Naive thymus-derived CD4-positive, alpha-beta T cell (primary cell): ENCODE measurements at regions of chr2 and their contacts with region 1.

Region 1: GRCh38 chr2:102082571-102083392 is 59.8 kb upstream of the IL1R1 start:
- DNase-seq: peak in 8 of 9 donors; percentile 36 to 75 (median 64)
- ATAC-seq: peak; percentile 83
- H3K4me3 ChIP-seq: peak overlapping the region; percentile 24
- H3K4me3 Mint-ChIP-seq: peak overlapping the region; percentile 67 to 88 (median 80)
- H3K27ac ChIP-seq: peak overlapping the region; percentile 61
- H3K27ac Mint-ChIP-seq: peak overlapping the region; percentile 84 to 95 (median 91)
- H3K4me1 ChIP-seq: peaks cover 10 to 20% of the 10 kb centered on the region in 2 donors
- H3K4me1 Mint-ChIP-seq: peaks cover 19 to 49% (median 42%) of the 10 kb centered on the region in 7 donors
- H3K27me3 ChIP-seq: no peaks in the 10 kb centered on the region
- H3K27me3 Mint-ChIP-seq: peaks cover 0 to 20% (median 0%) of the 10 kb centered on the region in 5 donors

Region 2: DNA sequence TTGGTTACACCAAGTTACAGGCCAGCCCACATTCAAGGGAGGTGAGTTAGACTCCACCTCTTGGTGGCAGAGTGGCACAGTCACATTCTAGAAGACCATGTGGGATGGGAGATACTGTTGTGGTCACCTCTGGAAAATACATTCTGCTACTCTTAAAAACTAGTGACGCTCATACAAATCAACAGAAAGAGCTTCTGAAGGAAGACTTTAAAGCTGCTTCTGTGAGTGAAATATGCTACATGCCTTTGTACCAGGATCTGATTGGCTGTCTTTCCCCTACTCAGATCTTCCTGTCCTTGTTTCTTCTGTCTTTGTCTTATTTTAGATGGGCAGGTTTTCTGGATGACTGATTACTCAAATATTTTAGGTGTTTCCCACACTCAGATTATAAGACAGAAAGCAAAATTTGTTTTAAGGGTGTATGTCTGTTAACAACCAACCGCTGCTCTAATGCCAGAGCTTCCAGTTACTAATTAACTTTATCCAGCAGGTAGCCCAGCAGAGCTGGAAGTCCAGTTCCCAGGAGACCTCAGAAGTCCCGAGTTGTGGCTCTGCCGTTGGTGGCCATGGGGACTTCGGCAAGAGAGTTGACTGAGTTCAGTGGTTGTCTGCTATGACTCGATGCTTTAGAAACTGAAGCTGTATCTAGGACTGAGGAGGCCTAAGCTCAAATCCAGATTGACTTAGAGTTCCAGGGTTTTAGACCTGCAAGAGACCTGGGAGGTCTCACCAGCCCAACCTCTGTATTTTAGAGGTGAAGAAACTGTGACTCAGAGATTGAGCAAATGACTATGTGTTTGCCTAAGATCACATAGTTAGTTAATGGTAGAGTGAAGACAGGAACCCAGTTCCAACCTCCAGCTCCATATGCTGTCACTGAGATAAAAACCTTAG is 83.6 kb before region 1 on chr2:
- CTCF ChIA-PET with region 1: no interaction called
- POLR2A ChIA-PET with region 1: no interaction called
- intact Hi-C with region 1: no loop called
- DNase-seq: no peak
- ATAC-seq: no peak
- H3K4me3 ChIP-seq: no peak overlapping the region
- H3K4me3 Mint-ChIP-seq: no peak overlapping the region
- H3K27ac ChIP-seq: no peak overlapping the region
- H3K27ac Mint-ChIP-seq: no peak overlapping the region
- H3K4me1 ChIP-seq: no peaks in the 10 kb centered on the region
- H3K4me1 Mint-ChIP-seq: peaks cover 0 to 6% (median 0%) of the 10 kb centered on the region in 7 donors
- H3K27me3 ChIP-seq: no peaks in the 10 kb centered on the region
- H3K27me3 Mint-ChIP-seq: peaks cover 0 to 17% (median 0%) of the 10 kb centered on the region in 5 donors

Region 3: DNA sequence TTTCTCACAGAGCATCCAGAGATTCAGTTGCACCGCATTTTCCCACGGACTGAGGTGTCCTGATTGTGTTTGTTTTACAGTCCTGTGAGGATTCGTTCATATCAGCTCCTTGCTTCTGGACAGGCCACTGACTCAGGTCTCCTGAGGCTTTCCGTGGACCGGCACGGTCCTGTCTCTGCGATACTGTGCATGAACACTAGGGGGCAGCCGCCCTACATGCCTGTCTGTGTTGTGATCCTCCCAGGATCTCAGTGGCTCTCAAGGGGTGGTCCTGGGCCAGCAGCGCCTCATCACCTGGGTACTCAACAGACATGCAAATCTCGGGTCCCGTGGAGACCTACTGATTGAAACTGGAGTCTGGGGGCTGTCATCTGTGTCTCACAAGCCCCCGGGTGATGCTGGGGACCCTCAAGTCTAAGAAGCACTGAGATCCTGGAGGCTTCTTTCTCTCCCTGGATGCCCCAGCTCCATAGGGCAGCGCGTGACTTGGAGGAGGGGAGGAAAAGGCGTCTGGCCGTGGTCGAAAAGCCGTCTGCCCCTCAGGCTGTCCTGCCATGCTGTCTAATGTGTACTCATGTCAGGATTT is 62.1 kb before region 1 on chr2:
- CTCF ChIA-PET with region 1: no interaction called
- POLR2A ChIA-PET with region 1: no interaction called
- intact Hi-C with region 1: loop called in 1 of 2 experiments (anchors 5 kb)
- DNase-seq: peak; percentile 61 to 82 (median 76)
- ATAC-seq: peak; percentile 96
- H3K4me3 ChIP-seq: no peak overlapping the region
- H3K4me3 Mint-ChIP-seq: no peak overlapping the region
- H3K27ac ChIP-seq: no peak overlapping the region
- H3K27ac Mint-ChIP-seq: no peak overlapping the region
- H3K4me1 ChIP-seq: no peaks in the 10 kb centered on the region
- H3K4me1 Mint-ChIP-seq: peaks cover 0 to 12% (median 0%) of the 10 kb centered on the region in 7 donors
- H3K27me3 ChIP-seq: no peaks in the 10 kb centered on the region
- H3K27me3 Mint-ChIP-seq: peaks cover 0 to 5% (median 0%) of the 10 kb centered on the region in 5 donors

Region 4: GRCh38 chr2:102033031-102033749 is 49.6 kb before region 1 on chr2:
- CTCF ChIA-PET with region 1: no interaction called
- POLR2A ChIA-PET with region 1: interaction called, 3 read pairs
- intact Hi-C with region 1: loop called in 1 of 2 experiments (anchors 5 kb)
- DNase-seq: peak in 5 of 9 donors; percentile 27 to 40 (median 30)
- ATAC-seq: peak; percentile 74
- H3K4me3 ChIP-seq: no peak overlapping the region
- H3K4me3 Mint-ChIP-seq: peak overlapping the region; percentile 47 to 75 (median 66)
- H3K27ac ChIP-seq: no peak overlapping the region
- H3K27ac Mint-ChIP-seq: peak overlapping the region; percentile 62 to 90 (median 79)
- H3K4me1 ChIP-seq: peaks cover 4 to 24% of the 10 kb centered on the region in 2 donors
- H3K4me1 Mint-ChIP-seq: peaks cover 25 to 40% (median 34%) of the 10 kb centered on the region in 7 donors
- H3K27me3 ChIP-seq: no peaks in the 10 kb centered on the region
- H3K27me3 Mint-ChIP-seq: no peaks in the 10 kb centered on the region

Region 5: DNA sequence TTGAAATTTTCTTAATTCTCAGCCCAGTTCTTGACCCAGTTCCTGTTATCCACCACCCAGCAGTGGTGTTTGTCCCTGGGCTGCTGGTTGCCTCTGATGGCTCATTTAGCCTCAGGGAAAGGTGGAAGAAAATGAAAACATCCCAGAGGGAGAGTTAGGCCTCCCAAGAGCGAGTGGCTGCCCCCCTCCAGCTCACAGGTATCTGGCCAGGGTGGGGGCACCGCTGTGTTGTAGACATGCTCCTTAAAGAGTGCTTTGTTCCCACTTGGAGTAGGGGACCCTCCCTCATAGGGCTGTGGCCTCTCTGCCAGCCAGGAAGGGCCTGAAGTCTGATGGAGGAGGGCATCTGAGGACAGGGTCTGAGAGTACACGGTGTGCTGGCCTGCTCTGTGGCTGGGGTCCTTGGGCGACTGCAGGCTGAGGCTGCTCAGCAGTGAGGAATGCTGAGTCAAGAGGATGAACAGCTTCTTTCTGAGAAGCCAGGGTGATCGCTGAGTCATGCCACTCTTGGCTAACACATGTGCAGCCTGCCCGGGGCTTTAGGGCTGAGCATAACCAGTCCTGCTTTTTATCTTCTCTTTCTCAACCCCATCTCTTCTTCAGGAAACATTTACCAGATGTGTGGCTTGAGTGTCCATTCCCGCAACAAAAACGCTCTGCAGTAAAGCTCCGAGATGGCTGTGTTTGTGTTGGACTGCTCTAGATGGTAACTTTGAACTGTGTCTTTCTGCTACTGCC is 18.7 kb before region 1 on chr2:
- CTCF ChIA-PET with region 1: interaction called, 3 read pairs
- POLR2A ChIA-PET with region 1: no interaction called
- intact Hi-C with region 1: loop called in 1 of 2 experiments (anchors 2 kb)
- DNase-seq: no peak
- ATAC-seq: peak; percentile 72
- H3K4me3 ChIP-seq: no peak overlapping the region
- H3K4me3 Mint-ChIP-seq: no peak overlapping the region
- H3K27ac ChIP-seq: no peak overlapping the region
- H3K27ac Mint-ChIP-seq: peak overlapping the region in 1 of 9 donors; percentile 13
- H3K4me1 ChIP-seq: no peaks in the 10 kb centered on the region
- H3K4me1 Mint-ChIP-seq: peaks cover 0 to 31% (median 4%) of the 10 kb centered on the region in 7 donors
- H3K27me3 ChIP-seq: no peaks in the 10 kb centered on the region
- H3K27me3 Mint-ChIP-seq: peaks cover 0 to 5% (median 0%) of the 10 kb centered on the region in 5 donors

Region 6: DNA sequence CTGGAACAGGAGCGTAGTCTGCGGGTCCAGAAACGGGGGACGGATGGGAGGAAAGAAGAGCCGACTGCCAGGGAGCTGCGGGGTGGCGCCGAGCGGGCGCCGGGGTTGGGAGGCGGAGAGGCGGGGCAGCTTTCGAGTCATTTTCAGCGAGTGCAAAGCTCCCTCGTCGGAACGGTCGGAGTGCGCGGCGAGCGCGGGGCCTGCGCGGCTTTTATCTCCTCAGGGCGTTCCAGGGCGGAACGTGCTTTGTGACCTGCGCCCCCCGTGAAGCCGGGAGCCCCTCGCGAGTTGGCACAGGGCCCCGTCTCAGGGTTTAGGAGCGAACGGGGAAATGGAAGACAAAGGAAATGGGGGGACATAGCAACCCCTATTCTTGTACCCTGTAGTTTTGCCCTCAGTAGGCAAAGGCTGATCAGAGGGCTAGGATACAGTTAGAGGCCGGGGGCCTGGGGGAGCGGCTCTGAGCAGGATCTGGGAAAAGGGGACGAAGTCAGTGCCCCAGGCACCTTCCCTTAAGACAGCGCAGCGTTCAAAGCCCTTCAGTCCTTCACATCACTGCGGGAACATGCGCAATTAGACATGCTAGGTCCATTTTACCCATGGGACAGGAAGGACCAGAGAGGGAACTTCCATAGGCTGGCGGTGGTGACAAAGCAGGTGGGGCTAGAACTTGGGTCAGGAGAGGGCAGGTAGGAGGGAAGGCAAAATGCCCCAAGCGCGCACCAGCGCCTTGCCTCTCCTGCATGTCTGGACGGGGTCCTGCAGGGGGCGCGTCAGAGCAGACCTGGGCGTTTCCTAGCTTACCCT is 168.5 kb after region 1 on chr2:
- CTCF ChIA-PET with region 1: no interaction called
- POLR2A ChIA-PET with region 1: no interaction called
- intact Hi-C with region 1: loop called (anchors 5 kb)
- DNase-seq: peak; percentile 28 to 63 (median 57)
- ATAC-seq: peak; percentile 90
- H3K4me3 ChIP-seq: peak overlapping the region; percentile 75
- H3K4me3 Mint-ChIP-seq: peak overlapping the region; percentile 86 to 99 (median 94)
- H3K27ac ChIP-seq: no peak overlapping the region
- H3K27ac Mint-ChIP-seq: peak overlapping the region in 7 of 9 donors; percentile 56 to 94 (median 78)
- H3K4me1 ChIP-seq: peaks cover 0 to 18% of the 10 kb centered on the region in 2 donors
- H3K4me1 Mint-ChIP-seq: peaks cover 7 to 44% (median 14%) of the 10 kb centered on the region in 7 donors
- H3K27me3 ChIP-seq: no peaks in the 10 kb centered on the region
- H3K27me3 Mint-ChIP-seq: peaks cover 0 to 5% (median 2%) of the 10 kb centered on the region in 5 donors

Region 7: GRCh38 chr2:102258386-102259074 is 175.7 kb after region 1 on chr2:
- CTCF ChIA-PET with region 1: no interaction called
- POLR2A ChIA-PET with region 1: no interaction called
- intact Hi-C with region 1: loop called (anchors 5 kb)
- DNase-seq: no peak
- ATAC-seq: peak; percentile 81
- H3K4me3 ChIP-seq: no peak overlapping the region
- H3K4me3 Mint-ChIP-seq: peak overlapping the region in 1 of 10 donors; percentile 86
- H3K27ac ChIP-seq: no peak overlapping the region
- H3K27ac Mint-ChIP-seq: peak overlapping the region in 3 of 9 donors; percentile 19 to 97 (median 54)
- H3K4me1 ChIP-seq: peaks cover 4 to 36% of the 10 kb centered on the region in 2 donors
- H3K4me1 Mint-ChIP-seq: peaks cover 10 to 45% (median 20%) of the 10 kb centered on the region in 7 donors
- H3K27me3 ChIP-seq: no peaks in the 10 kb centered on the region
- H3K27me3 Mint-ChIP-seq: no peaks in the 10 kb centered on the region

Region 8: DNA sequence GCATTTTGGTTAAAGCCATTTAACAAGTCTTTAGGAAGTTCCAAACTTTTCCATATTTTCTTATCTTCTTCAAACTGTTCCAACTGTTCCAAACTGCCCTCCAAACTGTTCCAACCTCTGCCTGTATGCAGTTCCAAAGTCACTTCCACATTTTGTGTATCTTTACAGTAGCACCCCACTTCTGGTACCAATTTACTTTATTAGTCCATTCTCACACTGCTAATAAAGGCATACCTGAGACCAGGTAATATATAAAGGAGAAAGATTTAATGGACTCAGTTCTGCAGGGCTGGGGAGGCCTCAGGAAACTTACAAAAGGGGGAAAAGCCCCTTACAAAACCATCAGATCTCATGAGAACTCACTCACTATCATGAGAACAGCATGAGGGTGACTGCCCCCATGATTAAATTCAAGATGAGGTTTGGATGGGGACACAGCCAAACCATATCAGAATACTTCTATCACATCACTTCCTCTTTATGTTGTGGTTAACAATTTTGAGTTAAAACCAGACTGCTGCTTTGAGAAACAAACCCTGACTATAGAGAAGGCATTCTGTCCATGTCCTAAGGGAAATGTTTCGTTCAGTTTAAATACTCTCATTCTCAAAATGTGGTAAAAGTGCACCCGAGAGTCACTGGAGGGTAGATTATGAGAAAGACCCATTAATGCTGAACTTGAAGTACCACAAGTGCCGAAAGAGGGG is 283.8 kb after region 1 on chr2:
- CTCF ChIA-PET with region 1: no interaction called
- POLR2A ChIA-PET with region 1: no interaction called
- intact Hi-C with region 1: loop called in 1 of 2 experiments (anchors 2 kb)
- DNase-seq: peak in 6 of 9 donors; percentile 12 to 46 (median 32)
- ATAC-seq: peak; percentile 37
- H3K4me3 ChIP-seq: peak overlapping the region; percentile 39
- H3K4me3 Mint-ChIP-seq: peak overlapping the region; percentile 53 to 79 (median 72)
- H3K27ac ChIP-seq: peak overlapping the region; percentile 56
- H3K27ac Mint-ChIP-seq: peak overlapping the region; percentile 77 to 95 (median 88)
- H3K4me1 ChIP-seq: peaks cover 25 to 40% of the 10 kb centered on the region in 2 donors
- H3K4me1 Mint-ChIP-seq: peaks cover 33 to 74% (median 51%) of the 10 kb centered on the region in 7 donors
- H3K27me3 ChIP-seq: no peaks in the 10 kb centered on the region
- H3K27me3 Mint-ChIP-seq: no peaks in the 10 kb centered on the region